ENCODE measurements at regions of chr9 and their contacts with region 1.

Region 1: GRCh38 chr9:131125128-131126058 is at the start of gene NUP214:
- DNase-seq: peak; percentile 100
- ATAC-seq: peak; percentile 100
- H3K4me3 Mint-ChIP-seq: peak within 1 kb of the TSS; percentile 94
- H3K27ac Mint-ChIP-seq: peak within 1 kb of the TSS; percentile 92
- H3K4me1 Mint-ChIP-seq: peaks cover 31% of the 10 kb centered on the region
- H3K27me3 Mint-ChIP-seq: no peaks in the 10 kb centered on the region
- total RNA-seq, gene NUP214: 61.4 to 97.7 TPM

Region 2: DNA sequence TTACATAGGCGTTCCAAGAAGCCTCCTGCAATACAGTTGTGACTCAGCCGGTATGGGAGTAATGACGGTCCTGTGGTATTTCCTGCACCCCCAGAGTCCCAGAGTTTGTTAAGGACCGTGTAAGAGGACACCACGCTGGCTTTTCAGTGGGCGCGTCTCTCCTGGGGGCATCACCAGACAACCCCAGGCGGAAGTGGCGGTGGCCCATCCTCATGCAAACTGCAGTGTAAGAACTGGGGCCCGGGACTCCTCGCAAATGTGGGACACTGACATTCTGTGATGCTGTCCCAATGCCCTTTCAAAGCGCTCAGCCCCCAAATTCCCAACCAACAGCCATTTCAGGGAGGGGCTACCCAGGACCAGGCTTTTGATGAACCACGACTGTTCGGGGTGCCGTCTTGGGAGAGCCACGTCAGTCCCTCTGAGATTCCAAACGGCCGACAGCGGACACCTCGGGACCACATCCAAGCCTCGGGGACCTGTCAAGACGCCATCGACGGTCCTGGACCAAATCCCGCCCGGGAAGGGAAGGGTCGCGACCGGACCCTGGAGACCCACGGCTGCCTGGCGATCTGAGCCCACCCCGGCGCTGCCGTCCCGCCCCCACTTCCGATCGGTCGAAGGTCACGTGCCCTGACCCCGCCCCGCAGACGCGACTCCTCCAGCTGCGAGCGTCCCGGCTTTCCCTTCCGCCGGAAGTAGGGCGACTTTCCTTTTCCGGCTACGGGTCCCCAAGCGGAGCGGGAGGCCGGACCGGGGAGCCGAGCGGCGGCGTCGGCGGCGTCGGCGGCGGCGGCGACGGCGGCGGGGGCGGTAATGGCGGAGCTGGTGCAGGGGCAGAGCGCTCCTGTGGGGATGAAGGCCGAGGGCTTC is 546.3 kb before region 1 on chr9 and contains the start of gene FUBP3:
- CTCF ChIA-PET with region 1: no interaction called
- POLR2A ChIA-PET with region 1: no interaction called
- intact Hi-C with region 1: loop called in 1 of 2 experiments (anchors 1 kb)
- DNase-seq: peak; percentile 96
- ATAC-seq: peak; percentile 94
- H3K4me3 Mint-ChIP-seq: peak within 1 kb of the TSS; percentile 90
- H3K27ac Mint-ChIP-seq: peak within 1 kb of the TSS; percentile 89
- H3K4me1 Mint-ChIP-seq: peaks cover 32% of the 10 kb centered on the region
- H3K27me3 Mint-ChIP-seq: no peaks in the 10 kb centered on the region
- total RNA-seq, gene FUBP3: 36.4 to 38.5 TPM

Region 3: DNA sequence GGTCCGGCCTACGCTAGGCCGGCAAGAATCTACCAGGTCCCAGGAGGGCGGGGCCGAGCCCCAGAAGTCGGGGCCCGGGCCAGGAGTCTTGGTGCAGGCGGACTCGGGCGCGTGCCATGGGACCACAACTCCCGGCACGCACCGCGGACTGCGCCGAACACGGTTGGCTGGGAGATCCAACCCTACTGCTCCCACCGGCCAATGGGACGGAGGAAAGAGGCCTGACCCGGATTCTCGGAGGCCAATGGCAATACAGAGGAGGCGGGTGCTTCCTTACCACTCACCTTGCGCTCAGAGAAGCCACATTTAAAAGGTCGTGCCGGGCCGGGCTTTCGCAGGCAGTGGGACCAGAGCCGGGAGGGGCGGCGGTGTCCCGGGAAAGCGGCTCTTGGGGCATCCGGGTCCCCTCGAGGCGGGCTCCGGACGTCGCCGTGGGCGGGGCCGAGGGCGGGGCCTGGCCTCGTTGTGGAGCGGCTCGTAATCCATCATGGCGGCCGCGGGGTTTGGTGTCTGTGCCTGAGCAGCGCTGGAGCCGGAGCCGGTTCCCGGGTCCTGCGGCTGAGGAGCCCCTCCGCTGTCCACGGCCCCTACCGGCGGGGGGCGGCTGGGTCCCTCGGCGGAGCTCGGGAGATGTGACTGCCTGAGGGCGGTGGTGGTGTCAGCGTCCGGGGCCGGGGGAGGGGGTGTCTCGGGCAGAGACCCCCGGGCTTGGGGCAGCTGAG is 412.7 kb before region 1 on chr9:
- CTCF ChIA-PET with region 1: no interaction called
- POLR2A ChIA-PET with region 1: no interaction called
- intact Hi-C with region 1: loop called in 1 of 2 experiments (anchors 1 kb)
- DNase-seq: peak; percentile 98
- ATAC-seq: peak; percentile 99
- H3K4me3 Mint-ChIP-seq: peak overlapping the region; percentile 82
- H3K27ac Mint-ChIP-seq: peak overlapping the region; percentile 87
- H3K4me1 Mint-ChIP-seq: peaks cover 35% of the 10 kb centered on the region
- H3K27me3 Mint-ChIP-seq: no peaks in the 10 kb centered on the region

Region 4: DNA sequence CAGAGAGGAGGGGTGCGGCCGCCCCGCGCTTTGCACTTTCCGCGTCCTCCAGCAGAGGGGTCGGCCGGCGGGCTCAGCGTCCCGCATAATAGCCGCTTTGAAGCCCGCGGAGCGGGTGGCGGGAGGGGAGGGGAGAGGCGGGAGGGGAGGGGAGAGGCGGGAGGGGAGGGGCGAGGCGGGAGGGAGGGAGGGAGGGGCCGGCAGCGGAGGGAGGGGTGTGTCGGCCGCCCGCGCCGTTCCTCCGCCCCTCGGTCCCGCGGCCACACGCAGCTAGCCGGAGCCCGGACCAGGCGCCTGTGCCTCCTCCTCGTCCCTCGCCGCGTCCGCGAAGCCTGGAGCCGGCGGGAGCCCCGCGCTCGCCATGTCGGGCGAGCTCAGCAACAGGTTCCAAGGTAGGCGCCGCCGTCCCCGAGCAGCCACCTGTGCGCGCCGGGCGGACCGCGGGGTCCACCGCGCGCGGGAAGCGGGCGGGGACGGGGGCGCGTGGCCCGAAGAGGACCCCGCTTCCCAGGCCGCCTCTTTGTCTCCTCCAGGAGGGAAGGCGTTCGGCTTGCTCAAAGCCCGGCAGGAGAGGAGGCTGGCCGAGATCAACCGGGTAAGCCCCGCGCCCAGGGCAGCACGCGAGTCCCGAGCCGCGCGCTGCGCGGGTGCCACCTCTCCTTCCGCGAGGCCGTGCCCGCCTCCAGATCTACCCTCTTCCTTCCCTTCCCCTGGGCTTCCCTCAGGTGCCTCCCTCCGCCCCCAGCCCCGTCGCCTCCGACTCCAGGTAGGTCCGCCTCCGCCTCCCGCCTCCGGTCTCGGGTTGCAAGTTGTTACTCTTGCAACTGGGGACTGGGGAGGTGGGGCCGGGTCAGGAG is 28.9 kb before region 1 on chr9 and contains the start of gene AIF1L:
- CTCF ChIA-PET with region 1: interaction called, 4 read pairs
- POLR2A ChIA-PET with region 1: no interaction called
- intact Hi-C with region 1: loop called in 1 of 2 experiments (anchors 1 kb)
- DNase-seq: peak; percentile 58
- ATAC-seq: peak; percentile 39
- H3K4me3 Mint-ChIP-seq: peak within 1 kb of the TSS; percentile 63
- H3K27ac Mint-ChIP-seq: no peak within 1 kb of the TSS
- H3K4me1 Mint-ChIP-seq: peaks cover 3% of the 10 kb centered on the region
- H3K27me3 Mint-ChIP-seq: peaks cover 28% of the 10 kb centered on the region
- total RNA-seq, gene AIF1L: 1.0 to 1.4 TPM

Region 5: DNA sequence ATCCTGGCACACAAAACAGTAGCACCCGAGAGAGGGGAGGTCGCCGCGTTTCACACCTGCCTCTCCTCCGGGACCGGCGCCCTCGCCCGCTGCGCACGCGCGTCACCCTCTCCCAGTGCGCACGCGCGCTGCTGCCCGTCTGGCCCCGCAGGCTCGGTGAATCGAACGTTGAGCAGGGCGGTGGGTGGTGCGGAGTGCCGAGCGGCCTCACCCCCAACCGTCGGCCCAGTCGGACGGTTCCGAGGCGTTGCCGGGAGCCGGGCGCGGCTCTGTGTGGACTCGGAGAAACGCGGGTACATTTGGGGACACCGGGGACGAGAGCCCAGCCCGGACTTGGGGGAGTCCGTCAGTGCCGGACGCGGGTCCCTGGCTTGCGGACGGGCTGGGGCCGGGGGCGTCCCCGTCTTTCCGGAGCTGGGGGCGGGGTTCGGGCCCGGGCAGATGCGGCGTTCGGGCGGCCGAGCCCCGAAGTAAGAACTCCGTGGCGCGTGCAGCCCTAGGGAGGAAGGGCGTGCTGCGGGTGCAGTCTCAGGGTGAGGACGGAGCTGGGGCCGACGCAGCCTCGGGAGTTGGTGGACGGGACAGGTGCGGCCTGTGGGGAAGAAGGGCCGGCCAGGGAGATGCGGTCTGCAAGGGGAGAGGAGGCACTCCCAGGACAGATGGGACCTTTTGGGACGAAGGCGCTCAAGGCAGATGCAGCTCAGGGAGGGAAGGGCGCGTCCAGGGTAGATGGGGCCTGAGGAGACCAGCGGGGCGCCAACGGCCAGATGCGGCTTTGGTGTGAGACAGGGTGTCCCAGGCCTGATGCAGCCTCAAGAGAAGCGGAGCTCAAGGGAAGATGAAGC is 377.6 kb after region 1 on chr9 and contains the start of gene POMT1:
- CTCF ChIA-PET with region 1: no interaction called
- POLR2A ChIA-PET with region 1: interaction called, 3 read pairs
- intact Hi-C with region 1: loop called in 1 of 2 experiments (anchors 1 kb)
- DNase-seq: peak; percentile 94
- ATAC-seq: peak; percentile 42
- H3K4me3 Mint-ChIP-seq: peak within 1 kb of the TSS; percentile 83
- H3K27ac Mint-ChIP-seq: peak within 1 kb of the TSS; percentile 84
- H3K4me1 Mint-ChIP-seq: peaks cover 53% of the 10 kb centered on the region
- H3K27me3 Mint-ChIP-seq: no peaks in the 10 kb centered on the region
- total RNA-seq, gene POMT1: 28.2 to 30.7 TPM

Region 6: DNA sequence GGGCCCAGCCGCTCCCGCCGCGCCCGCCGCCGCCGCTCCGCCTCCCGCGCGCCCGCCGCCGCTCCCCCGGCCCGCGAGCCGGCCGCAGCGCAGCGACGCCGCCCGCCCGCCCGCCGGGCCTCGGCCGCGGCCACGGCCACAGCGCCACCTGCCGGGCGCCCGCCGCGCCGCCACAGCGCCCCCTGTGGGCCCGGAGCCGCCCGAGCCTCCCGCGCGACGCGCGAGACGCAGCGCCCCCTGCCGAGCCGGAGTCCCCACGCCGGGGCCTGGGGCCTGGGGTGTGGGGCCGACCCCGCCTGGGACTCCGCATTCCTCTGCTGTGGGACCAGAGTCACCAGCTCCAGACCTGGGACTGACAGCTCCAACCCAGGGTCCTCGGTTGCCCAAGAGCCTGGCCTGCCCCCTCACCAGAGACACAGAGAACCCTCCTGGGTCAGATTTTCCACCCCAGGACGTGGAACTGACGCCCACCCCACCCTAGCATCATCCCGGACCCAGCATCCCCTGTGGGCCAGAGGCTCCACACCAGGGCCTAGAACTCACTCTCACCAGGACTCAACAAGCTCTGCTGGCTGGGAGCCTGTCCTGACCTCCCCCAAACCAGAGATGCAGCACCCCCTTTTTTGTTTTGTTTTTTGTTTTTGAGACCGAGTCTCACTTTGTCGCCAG is 614.7 kb after region 1 on chr9 and contains the start of gene RAPGEF1:
- CTCF ChIA-PET with region 1: no interaction called
- POLR2A ChIA-PET with region 1: no interaction called
- intact Hi-C with region 1: loop called in 1 of 2 experiments (anchors 10 kb)
- DNase-seq: peak; percentile 90
- ATAC-seq: peak; percentile 74
- H3K4me3 Mint-ChIP-seq: peak within 1 kb of the TSS; percentile 95
- H3K27ac Mint-ChIP-seq: peak within 1 kb of the TSS; percentile 95
- H3K4me1 Mint-ChIP-seq: peaks cover 57% of the 10 kb centered on the region
- H3K27me3 Mint-ChIP-seq: no peaks in the 10 kb centered on the region
- total RNA-seq, gene RAPGEF1: 86.7 to 108 TPM

Region 7: GRCh38 chr9:132669698-132670456 is 1544.5 kb after region 1 on chr9 and contains the start of gene DDX31:
- CTCF ChIA-PET with region 1: no interaction called
- POLR2A ChIA-PET with region 1: no interaction called
- intact Hi-C with region 1: loop called in 1 of 2 experiments (anchors 5 kb)
- DNase-seq: peak; percentile 91
- ATAC-seq: peak; percentile 86
- H3K4me3 Mint-ChIP-seq: peak within 1 kb of the TSS; percentile 89
- H3K27ac Mint-ChIP-seq: peak within 1 kb of the TSS; percentile 90
- H3K4me1 Mint-ChIP-seq: peaks cover 49% of the 10 kb centered on the region
- H3K27me3 Mint-ChIP-seq: no peaks in the 10 kb centered on the region
- total RNA-seq, gene DDX31: 20.9 to 21.0 TPM

Measured in activated CD4-positive, alpha-beta T cell treated with anti-CD3 and anti-CD28 coated beads for 36 hours (primary cell).